Heart right ventricle (tissue), 16 donors: ENCODE measurements at regions of chr20 and their contacts with region 1.

Region 1: GRCh38 chr20:64062596-64063388 is at the start of gene TCEA2:
- DNase-seq: peak; percentile 97 to 98
- ATAC-seq: peak; percentile 91 to 97 (median 96)
- H3K4me3 ChIP-seq: peak within 1 kb of the TSS; percentile 77 to 100 (median 93)
- H3K27ac ChIP-seq: peak within 1 kb of the TSS; percentile 44 to 92 (median 88)
- H3K4me1 ChIP-seq: peaks cover 5 to 51% (median 30%) of the 10 kb centered on the region in 9 donors
- H3K27me3 ChIP-seq: peaks cover 0 to under 1% (median 0%) of the 10 kb centered on the region in 7 donors
- CTCF ChIP-seq: no peak
- total RNA-seq, gene TCEA2: 40.8 to 51.0 (median 44.9) TPM

Region 2: GRCh38 chr20:63635431-63636141 is 427.2 kb before region 1 on chr20:
- intact Hi-C with region 1: loop called in 1 of 10 experiments (anchors 10 kb)
- DNase-seq: no peak
- ATAC-seq: peak in 1 of 8 donors; percentile 31
- H3K4me3 ChIP-seq: no peak overlapping the region
- H3K27ac ChIP-seq: peak overlapping the region in 2 of 10 donors; percentile 29 to 87
- H3K4me1 ChIP-seq: peaks cover 0 to 72% (median 14%) of the 10 kb centered on the region in 9 donors
- H3K27me3 ChIP-seq: no peaks in the 10 kb centered on the region
- CTCF ChIP-seq: no peak

Region 3: GRCh38 chr20:64038565-64039292 is 24.1 kb before region 1 on chr20:
- intact Hi-C with region 1: loop called in 4 of 10 experiments (anchors 1 to 2 kb)
- DNase-seq: peak; percentile 83 to 92
- ATAC-seq: peak; percentile 82 to 91 (median 87)
- H3K4me3 ChIP-seq: peak overlapping the region; percentile 26 to 66 (median 57)
- H3K27ac ChIP-seq: peak overlapping the region; percentile 55 to 96 (median 84)
- H3K4me1 ChIP-seq: peaks cover 17 to 68% (median 56%) of the 10 kb centered on the region in 9 donors
- H3K27me3 ChIP-seq: peaks cover 3 to 77% (median 58%) of the 10 kb centered on the region in 7 donors
- CTCF ChIP-seq: peak; percentile 46 to 84 (median 76)

Region 4: DNA sequence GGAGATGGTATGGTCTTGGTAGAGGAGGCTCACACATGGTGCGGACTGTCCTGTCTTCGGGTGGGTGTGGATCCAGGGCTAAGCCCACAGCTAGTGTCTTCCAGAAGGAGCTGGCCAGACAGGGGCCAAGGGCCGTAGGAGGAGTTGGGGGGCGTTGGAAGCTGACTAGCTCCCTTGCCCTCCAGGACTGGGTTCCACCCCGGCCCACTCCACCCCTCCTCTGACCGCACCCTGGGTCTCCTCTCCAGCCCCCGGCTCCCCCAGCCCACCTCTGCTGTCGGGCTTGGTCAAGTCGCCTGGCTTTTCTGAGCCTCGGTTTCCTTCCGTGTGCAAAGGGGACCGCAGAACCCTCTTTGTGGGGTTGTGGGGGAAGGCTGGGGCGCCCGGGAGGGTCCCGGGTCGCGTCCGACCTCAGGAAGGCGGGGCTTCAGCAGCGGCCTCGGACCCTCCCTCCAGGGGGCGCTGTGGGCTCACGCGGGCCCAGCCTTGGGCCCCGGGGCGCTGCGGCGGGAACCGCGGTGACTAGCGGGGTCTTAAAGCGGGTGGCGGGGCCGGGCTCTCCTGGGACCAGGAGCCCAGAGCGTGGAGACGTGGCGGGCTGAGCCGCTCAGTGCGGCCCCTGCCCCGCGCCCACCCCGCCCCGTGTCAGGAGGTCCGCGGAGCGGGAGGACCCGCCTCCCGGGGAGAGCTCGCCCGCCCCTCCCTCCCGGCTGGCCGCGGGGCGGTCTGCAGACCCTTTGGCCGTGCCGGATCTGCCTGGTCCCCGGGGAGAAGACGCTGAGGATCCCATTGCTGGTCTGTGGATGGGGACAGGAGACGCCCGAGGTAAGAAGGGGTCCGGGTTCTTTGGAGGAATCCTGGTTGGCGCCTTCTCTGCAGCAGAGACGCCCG is 39.2 kb after region 1 on chr20:
- intact Hi-C with region 1: no loop called
- DNase-seq: peak in 1 of 2 donors; percentile 52
- ATAC-seq: peak in 7 of 8 donors; percentile 50 to 74 (median 67)
- H3K4me3 ChIP-seq: peak overlapping the region; percentile 11 to 57 (median 48)
- H3K27ac ChIP-seq: no peak overlapping the region
- H3K4me1 ChIP-seq: peaks cover 0 to 13% (median 12%) of the 10 kb centered on the region in 9 donors
- H3K27me3 ChIP-seq: peaks cover 29 to 64% (median 50%) of the 10 kb centered on the region in 7 donors
- CTCF ChIP-seq: peak; percentile 42 to 83 (median 71)

Region 5: GRCh38 chr20:64131406-64131805 is 68.6 kb after region 1 on chr20:
- intact Hi-C with region 1: no loop called
- DNase-seq: no peak
- ATAC-seq: no peak
- H3K4me3 ChIP-seq: no peak overlapping the region
- H3K27ac ChIP-seq: no peak overlapping the region
- H3K4me1 ChIP-seq: no peaks in the 10 kb centered on the region
- H3K27me3 ChIP-seq: peaks cover 0 to 31% (median 19%) of the 10 kb centered on the region in 7 donors
- CTCF ChIP-seq: no peak